HepG2 (cell line): ENCODE measurements at regions of chr10 and their contacts with region 1.

Region 1: GRCh38 chr10:72260588-72261322 is 13.0 kb upstream of the DDIT4 start:
- DNase-seq: peak; percentile 88
- ATAC-seq: peak; percentile 84
- H3K4me3 ChIP-seq: peak overlapping the region; percentile 50 to 74 (median 61)
- H3K27ac ChIP-seq: peak overlapping the region; percentile 91
- H3K4me1 ChIP-seq: peaks cover 84% of the 10 kb centered on the region
- H3K27me3 ChIP-seq: no peaks in the 10 kb centered on the region
- CTCF ChIP-seq: peak; percentile 85
- EP300 ChIP-seq: peak in 1 of 2 experiments; percentile 56; a peak in 1 of 4 replicates
- POLR2A ChIP-seq: peak; percentile 11 to 55; a peak in 2 of 4 replicates
- RAD21 ChIP-seq: no peak

Region 2: DNA sequence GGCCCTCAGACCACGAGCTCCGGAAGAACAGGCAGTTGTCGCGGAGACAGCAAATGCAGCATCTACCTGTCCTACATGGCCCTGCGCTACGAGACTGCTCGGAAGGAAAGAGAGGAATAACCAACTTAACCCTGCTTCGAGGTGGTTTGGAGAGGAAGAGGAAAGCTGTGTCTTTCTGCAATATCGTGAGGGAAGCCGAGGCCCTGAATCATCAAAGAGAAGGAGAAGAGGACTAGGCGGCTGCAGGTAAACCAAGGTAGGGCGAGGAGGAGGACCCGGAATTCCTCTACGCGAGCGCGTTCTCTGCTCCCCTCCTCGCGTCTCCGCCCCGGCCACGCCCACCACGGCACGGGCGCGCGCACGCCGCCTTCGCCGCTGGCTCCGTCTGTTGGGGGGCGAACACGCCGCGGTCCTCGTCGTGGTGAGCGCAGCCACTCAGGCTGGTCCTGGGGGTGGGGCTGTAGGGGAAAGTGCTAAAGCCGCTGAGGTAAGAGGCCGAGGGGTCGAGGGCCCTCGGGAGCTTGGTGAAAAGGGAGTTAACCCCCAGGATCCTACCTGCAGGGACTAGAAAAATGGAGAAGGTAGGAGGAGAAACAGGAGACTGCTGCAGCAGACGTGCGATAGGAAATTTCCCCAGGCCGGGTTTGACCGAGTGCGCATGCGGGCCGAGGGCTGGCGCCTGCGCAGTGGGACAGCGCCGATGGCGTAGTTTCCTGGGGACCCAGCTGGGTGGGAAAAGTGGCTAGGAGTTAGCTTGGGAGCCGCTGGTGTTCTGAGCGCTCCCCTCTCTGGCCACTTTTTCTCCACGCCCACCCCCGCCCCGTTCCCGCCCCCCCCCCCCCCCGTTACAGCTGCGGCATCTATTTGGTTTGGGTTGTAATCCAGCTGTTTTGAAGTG is 44.9 kb before region 1 on chr10 and contains the starts of genes ANAPC16 and ASCC1:
- CTCF ChIA-PET with region 1: no interaction called
- POLR2A ChIA-PET with region 1: interaction called, 10 read pairs
- in situ Hi-C with region 1: no loop called
- intact Hi-C with region 1: loop called (anchors 2 kb)
- DNase-seq: peak; percentile 85
- ATAC-seq: peak; percentile 93
- H3K4me3 ChIP-seq: peak within 1 kb of the TSS; percentile 82 to 98 (median 83)
- H3K27ac ChIP-seq: peak within 1 kb of the TSS; percentile 99
- H3K4me1 ChIP-seq: peaks cover 54% of the 10 kb centered on the region
- H3K27me3 ChIP-seq: no peaks in the 10 kb centered on the region
- CTCF ChIP-seq: peak; percentile 27; the same call in 1 of the 2 replicates
- EP300 ChIP-seq: peak; percentile 31 to 61; a peak in 2 of 4 replicates
- POLR2A ChIP-seq: peak; percentile 94 to 96
- RAD21 ChIP-seq: peak; percentile 44; the same call in 1 of the 2 replicates
- total RNA-seq, gene ANAPC16: 74.8 and 95.6 TPM in 2 replicates
- total RNA-seq, gene ASCC1: 30.1 and 51.0 TPM in 2 replicates

Region 3: GRCh38 chr10:72308320-72308987 is 47.7 kb after region 1 on chr10:
- CTCF ChIA-PET with region 1: no interaction called
- POLR2A ChIA-PET with region 1: interaction called, 10 read pairs
- in situ Hi-C with region 1: no loop called
- intact Hi-C with region 1: no loop called
- DNase-seq: peak; percentile 64
- ATAC-seq: peak; percentile 69
- H3K4me3 ChIP-seq: peak overlapping the region in 2 of 3 experiments; percentile 20 to 55; a peak in 3 of 6 replicates
- H3K27ac ChIP-seq: peak overlapping the region; percentile 26
- H3K4me1 ChIP-seq: peaks cover 59% of the 10 kb centered on the region
- H3K27me3 ChIP-seq: no peaks in the 10 kb centered on the region
- CTCF ChIP-seq: no peak
- EP300 ChIP-seq: no peak
- POLR2A ChIP-seq: no peak
- RAD21 ChIP-seq: no peak